ENCODE measurements at regions of chr13 and their contacts with region 1.

Region 1: GRCh38 chr13:48580185-48580803 is 47.4 kb upstream of the RCBTB2 start:
- DNase-seq: peak in 1 of 2 donors; percentile 87
- H3K4me3 ChIP-seq: no peak overlapping the region
- H3K27ac ChIP-seq: no peak overlapping the region
- H3K4me1 ChIP-seq: peaks cover 0 to 20% of the 10 kb centered on the region in 2 donors
- H3K27me3 ChIP-seq: no peaks in the 10 kb centered on the region
- CTCF ChIP-seq: peak; percentile 44 to 88 (median 79)

Region 2: GRCh38 chr13:48126944-48127830 is 453.1 kb before region 1 on chr13:
- intact Hi-C with region 1: loop called (anchors 5 kb)
- DNase-seq: peak in 1 of 2 donors; percentile 80
- H3K4me3 ChIP-seq: peak overlapping the region in 1 of 2 donors; percentile 43
- H3K27ac ChIP-seq: peak overlapping the region; percentile 80 to 91
- H3K4me1 ChIP-seq: peaks cover 8 to 13% of the 10 kb centered on the region in 2 donors
- H3K27me3 ChIP-seq: no peaks in the 10 kb centered on the region
- CTCF ChIP-seq: peak; percentile 61 to 65 (median 64)

Region 3: DNA sequence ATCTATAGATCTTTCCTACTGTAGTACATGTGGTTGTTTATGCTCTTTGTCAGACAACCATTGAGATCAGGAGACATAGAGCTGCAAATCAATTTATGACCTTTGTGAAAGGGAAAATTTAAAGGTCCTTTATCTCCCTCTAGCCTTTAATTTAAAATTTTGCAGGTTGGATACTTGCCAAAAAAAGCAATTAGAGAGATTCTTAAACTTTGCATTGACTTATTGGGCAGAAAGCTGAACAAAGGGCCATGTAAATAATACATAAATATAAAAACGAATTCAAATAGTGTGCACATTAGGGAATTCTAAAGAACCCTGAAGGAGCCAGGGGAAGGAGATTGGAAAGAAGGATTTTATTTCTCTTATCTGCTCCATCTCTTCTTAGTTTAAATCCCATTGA is 298.7 kb before region 1 on chr13:
- intact Hi-C with region 1: no loop called
- DNase-seq: no peak
- H3K4me3 ChIP-seq: no peak overlapping the region
- H3K27ac ChIP-seq: no peak overlapping the region
- H3K4me1 ChIP-seq: no peaks in the 10 kb centered on the region
- H3K27me3 ChIP-seq: no peaks in the 10 kb centered on the region
- CTCF ChIP-seq: no peak

Region 4: DNA sequence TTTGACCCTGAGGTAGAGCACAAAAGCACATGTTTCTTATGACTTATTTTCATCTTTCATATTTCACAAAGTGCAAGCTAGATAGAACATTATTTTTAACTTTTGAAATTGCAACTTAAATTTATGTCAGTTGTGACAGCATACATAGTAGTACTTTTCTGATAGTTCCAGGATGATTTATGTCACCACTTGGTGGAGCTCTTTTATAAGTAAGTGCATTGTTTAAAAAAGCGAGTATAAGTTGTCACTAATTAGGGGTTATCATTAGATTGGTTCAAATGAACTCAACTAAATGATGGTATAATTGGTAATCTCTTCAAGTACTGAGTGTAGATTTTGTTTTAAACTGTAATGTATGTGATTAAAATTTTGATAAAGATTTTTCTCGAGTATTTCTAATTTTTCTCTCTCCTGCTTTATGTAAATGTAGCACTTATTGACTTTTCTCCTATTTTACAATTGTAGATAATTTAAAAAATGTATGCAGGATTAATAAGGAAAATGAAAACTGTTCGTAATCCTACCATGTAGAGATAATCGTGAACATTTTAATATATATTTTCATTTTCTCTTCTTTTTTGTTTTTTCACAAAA is 245.7 kb before region 1 on chr13:
- intact Hi-C with region 1: loop called (anchors 1 kb)
- DNase-seq: no peak
- H3K4me3 ChIP-seq: no peak overlapping the region
- H3K27ac ChIP-seq: no peak overlapping the region
- H3K4me1 ChIP-seq: no peaks in the 10 kb centered on the region
- H3K27me3 ChIP-seq: no peaks in the 10 kb centered on the region
- CTCF ChIP-seq: peak; percentile 50 to 72 (median 54)

Region 5: GRCh38 chr13:48370815-48371214 is 209.5 kb before region 1 on chr13:
- intact Hi-C with region 1: no loop called
- DNase-seq: no peak
- H3K4me3 ChIP-seq: no peak overlapping the region
- H3K27ac ChIP-seq: no peak overlapping the region
- H3K4me1 ChIP-seq: no peaks in the 10 kb centered on the region
- H3K27me3 ChIP-seq: no peaks in the 10 kb centered on the region
- CTCF ChIP-seq: no peak

Region 6: DNA sequence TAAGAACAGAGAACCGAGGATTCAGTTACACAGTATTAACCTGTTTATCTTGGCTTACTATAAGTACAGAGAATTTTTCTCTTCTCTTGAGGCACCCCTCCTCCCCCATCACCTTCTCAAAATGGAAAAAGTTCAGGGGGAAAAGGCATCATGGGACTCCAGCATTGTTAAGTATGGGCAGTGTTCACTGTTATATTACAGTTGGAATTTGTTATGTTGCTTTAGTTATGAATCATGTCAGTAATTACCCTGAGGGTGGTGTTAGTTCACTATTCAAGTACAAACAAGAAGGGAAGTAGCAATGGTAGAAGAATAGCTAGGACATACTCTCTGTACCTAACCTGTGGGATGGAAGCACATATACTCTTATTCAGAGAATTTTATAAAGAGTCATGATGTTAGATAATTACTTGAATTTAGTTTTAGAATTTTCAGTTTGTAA is 179.4 kb before region 1 on chr13:
- intact Hi-C with region 1: loop called (anchors 5 kb)
- DNase-seq: no peak
- H3K4me3 ChIP-seq: no peak overlapping the region
- H3K27ac ChIP-seq: peak overlapping the region; percentile 74
- H3K4me1 ChIP-seq: peaks cover 3 to 40% of the 10 kb centered on the region in 2 donors
- H3K27me3 ChIP-seq: no peaks in the 10 kb centered on the region
- CTCF ChIP-seq: no peak

Region 7: GRCh38 chr13:48562296-48563066 is 17.8 kb before region 1 on chr13:
- intact Hi-C with region 1: no loop called
- DNase-seq: no peak
- H3K4me3 ChIP-seq: no peak overlapping the region
- H3K27ac ChIP-seq: no peak overlapping the region
- H3K4me1 ChIP-seq: peaks cover 0 to 3% of the 10 kb centered on the region in 2 donors
- H3K27me3 ChIP-seq: no peaks in the 10 kb centered on the region
- CTCF ChIP-seq: no peak

Measured in ascending aorta (tissue), 2 donors.